Naive thymus-derived CD4-positive, alpha-beta T cell (primary cell): ENCODE measurements at regions of chr4 and their contacts with region 1.

Region 1: GRCh38 chr4:6909073-6909965 is at the start of gene TBC1D14:
- DNase-seq: peak; percentile 84 to 93 (median 90)
- ATAC-seq: peak; percentile 94
- H3K4me3 ChIP-seq: peak within 1 kb of the TSS; percentile 70
- H3K4me3 Mint-ChIP-seq: peak within 1 kb of the TSS; percentile 89 to 95 (median 91)
- H3K27ac ChIP-seq: peak within 1 kb of the TSS; percentile 97
- H3K27ac Mint-ChIP-seq: peak within 1 kb of the TSS; percentile 81 to 94 (median 91)
- H3K4me1 ChIP-seq: peaks cover 20 to 38% of the 10 kb centered on the region in 2 donors
- H3K4me1 Mint-ChIP-seq: peaks cover 45 to 60% (median 55%) of the 10 kb centered on the region in 7 donors
- H3K27me3 ChIP-seq: no peaks in the 10 kb centered on the region
- H3K27me3 Mint-ChIP-seq: peaks cover 0 to 2% (median 0%) of the 10 kb centered on the region in 5 donors
- total RNA-seq, gene TBC1D14: 42.9 to 72.2 (median 58.3) TPM

Region 2: DNA sequence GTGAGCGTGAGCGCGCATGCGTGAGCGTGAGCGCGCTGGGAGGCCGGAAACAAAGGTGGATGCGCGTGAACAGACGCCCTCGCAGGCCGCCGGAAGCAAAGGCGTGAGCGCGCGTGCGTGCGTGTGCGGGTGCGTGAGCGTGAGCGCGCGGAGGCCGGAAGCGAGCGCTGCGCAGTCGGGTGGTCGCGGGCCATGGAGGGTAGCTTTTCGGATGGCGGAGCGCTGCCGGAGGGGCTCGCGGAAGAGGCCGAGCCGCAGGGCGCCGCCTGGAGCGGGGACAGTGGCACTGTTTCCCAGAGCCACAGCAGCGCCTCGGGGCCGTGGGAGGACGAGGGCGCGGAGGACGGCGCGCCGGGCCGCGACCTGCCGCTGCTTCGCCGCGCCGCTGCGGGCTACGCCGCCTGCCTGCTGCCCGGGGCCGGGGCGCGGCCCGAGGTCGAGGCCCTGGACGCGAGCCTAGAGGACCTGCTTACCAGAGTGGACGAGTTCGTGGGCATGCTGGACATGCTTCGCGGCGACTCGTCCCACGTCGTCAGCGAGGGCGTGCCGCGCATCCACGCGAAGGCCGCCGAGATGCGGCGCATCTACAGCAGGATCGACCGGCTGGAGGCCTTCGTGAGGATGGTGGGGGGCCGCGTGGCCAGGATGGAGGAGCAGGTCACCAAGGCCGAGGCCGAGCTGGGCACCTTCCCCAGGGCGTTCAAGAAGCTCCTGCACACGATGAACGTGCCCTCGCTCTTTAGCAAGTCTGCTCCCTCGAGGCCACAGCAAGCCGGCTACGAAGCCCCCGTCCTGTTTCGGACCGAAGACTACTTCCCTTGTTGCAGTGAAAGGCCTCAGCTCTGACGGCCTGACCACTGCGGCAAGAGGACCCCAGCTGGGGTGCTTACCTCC is 193.1 kb before region 1 on chr4 and contains the start of gene BLOC1S4:
- CTCF ChIA-PET with region 1: interaction called, 3 read pairs
- POLR2A ChIA-PET with region 1: interaction called, 4 read pairs
- intact Hi-C with region 1: loop called (anchors 1 kb)
- DNase-seq: peak; percentile 86 to 95 (median 91)
- ATAC-seq: peak; percentile 92
- H3K4me3 ChIP-seq: peak within 1 kb of the TSS; percentile 86
- H3K4me3 Mint-ChIP-seq: peak within 1 kb of the TSS; percentile 89 to 99 (median 95)
- H3K27ac ChIP-seq: peak within 1 kb of the TSS; percentile 90
- H3K27ac Mint-ChIP-seq: peak within 1 kb of the TSS; percentile 94 to 100 (median 97)
- H3K4me1 ChIP-seq: peaks cover 19 to 20% of the 10 kb centered on the region in 2 donors
- H3K4me1 Mint-ChIP-seq: peaks cover 22 to 52% (median 36%) of the 10 kb centered on the region in 7 donors
- H3K27me3 ChIP-seq: no peaks in the 10 kb centered on the region
- H3K27me3 Mint-ChIP-seq: peaks cover 0 to 8% (median 0%) of the 10 kb centered on the region in 5 donors
- total RNA-seq, gene BLOC1S4: 18.7 to 45.9 (median 25.0) TPM

Region 3: GRCh38 chr4:6926681-6927478 is 17.6 kb after region 1 on chr4:
- CTCF ChIA-PET with region 1: interaction called, 5 read pairs
- POLR2A ChIA-PET with region 1: interaction called, 15 read pairs
- intact Hi-C with region 1: loop called (anchors 1 to 2 kb)
- DNase-seq: peak in 7 of 9 donors; percentile 25 to 75 (median 43)
- ATAC-seq: peak; percentile 82
- H3K4me3 ChIP-seq: peak overlapping the region; percentile 36
- H3K4me3 Mint-ChIP-seq: peak overlapping the region; percentile 64 to 92 (median 79)
- H3K27ac ChIP-seq: peak overlapping the region; percentile 56
- H3K27ac Mint-ChIP-seq: peak overlapping the region; percentile 65 to 95 (median 87)
- H3K4me1 ChIP-seq: peaks cover 26 to 48% of the 10 kb centered on the region in 2 donors
- H3K4me1 Mint-ChIP-seq: peaks cover 68 to 90% (median 79%) of the 10 kb centered on the region in 7 donors
- H3K27me3 ChIP-seq: no peaks in the 10 kb centered on the region
- H3K27me3 Mint-ChIP-seq: no peaks in the 10 kb centered on the region

Region 4: DNA sequence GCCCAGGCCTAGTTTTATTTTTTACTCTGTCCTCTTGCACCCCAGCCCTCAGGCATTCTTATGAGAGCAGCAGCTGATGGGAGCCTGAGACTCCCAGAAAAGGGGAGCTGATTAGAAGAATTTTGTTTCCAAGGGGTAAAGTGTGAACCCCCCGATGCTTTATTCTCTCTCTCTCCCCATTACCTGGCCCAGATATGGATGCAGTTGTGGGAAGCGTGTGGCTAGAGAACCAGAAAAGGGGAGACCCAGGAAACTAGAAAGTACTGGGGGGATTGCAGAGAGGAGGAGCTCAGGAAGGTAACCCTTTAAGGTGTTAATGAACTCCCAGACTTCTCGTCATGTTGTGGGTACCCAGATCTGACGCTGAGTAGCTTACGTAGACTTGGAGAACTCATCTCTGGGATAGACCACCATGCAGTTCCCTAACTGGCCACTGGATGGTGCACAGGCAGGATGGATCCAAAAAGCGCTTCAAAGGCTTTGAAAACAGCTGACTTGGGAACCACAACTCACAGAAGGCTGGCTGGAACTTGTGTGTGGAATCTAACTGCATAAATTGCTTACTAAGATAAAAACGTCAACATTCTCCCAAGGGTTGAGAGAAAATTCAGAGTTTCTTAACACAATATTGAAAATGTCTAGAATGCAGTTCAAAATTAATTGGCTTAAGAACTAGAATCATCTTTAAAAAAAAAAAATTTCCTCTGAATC is 65.0 kb after region 1 on chr4:
- CTCF ChIA-PET with region 1: interaction called, 5 read pairs
- POLR2A ChIA-PET with region 1: interaction called, 9 read pairs
- intact Hi-C with region 1: loop called in 1 of 2 experiments (anchors 1 kb)
- DNase-seq: peak; percentile 55 to 82 (median 74)
- ATAC-seq: peak; percentile 100
- H3K4me3 ChIP-seq: no peak overlapping the region
- H3K4me3 Mint-ChIP-seq: peak overlapping the region in 3 of 10 donors; percentile 11 to 45 (median 18)
- H3K27ac ChIP-seq: no peak overlapping the region
- H3K27ac Mint-ChIP-seq: peak overlapping the region in 5 of 9 donors; percentile 43 to 86 (median 69)
- H3K4me1 ChIP-seq: peaks cover 0 to 9% of the 10 kb centered on the region in 2 donors
- H3K4me1 Mint-ChIP-seq: peaks cover 5 to 38% (median 22%) of the 10 kb centered on the region in 7 donors
- H3K27me3 ChIP-seq: no peaks in the 10 kb centered on the region
- H3K27me3 Mint-ChIP-seq: no peaks in the 10 kb centered on the region

Region 5: DNA sequence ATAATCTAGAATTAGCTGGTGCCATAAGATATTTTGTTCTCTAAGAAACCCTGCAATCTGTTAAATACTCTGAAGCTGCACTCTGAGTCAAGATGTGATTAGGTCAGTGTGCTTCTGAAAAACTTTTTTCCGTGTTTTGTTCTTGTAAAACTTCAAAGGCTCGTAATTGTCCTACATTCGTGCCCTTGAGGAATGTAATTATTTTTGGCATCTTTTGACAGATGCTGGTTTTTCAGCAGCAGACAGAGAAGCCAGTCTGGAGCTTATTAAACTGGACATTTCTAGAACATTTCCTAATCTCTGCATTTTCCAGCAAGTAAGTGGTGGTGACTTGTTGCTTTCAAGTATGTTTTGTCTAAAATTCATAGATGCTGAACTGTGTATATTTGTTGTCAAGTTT is 97.1 kb after region 1 on chr4:
- CTCF ChIA-PET with region 1: no interaction called
- POLR2A ChIA-PET with region 1: no interaction called
- intact Hi-C with region 1: no loop called
- DNase-seq: no peak
- ATAC-seq: no peak
- H3K4me3 ChIP-seq: no peak overlapping the region
- H3K4me3 Mint-ChIP-seq: no peak overlapping the region
- H3K27ac ChIP-seq: no peak overlapping the region
- H3K27ac Mint-ChIP-seq: peak overlapping the region in 1 of 9 donors; percentile 12
- H3K4me1 ChIP-seq: no peaks in the 10 kb centered on the region
- H3K4me1 Mint-ChIP-seq: peaks cover 0 to 15% (median 0%) of the 10 kb centered on the region in 7 donors
- H3K27me3 ChIP-seq: no peaks in the 10 kb centered on the region
- H3K27me3 Mint-ChIP-seq: no peaks in the 10 kb centered on the region

Region 6: DNA sequence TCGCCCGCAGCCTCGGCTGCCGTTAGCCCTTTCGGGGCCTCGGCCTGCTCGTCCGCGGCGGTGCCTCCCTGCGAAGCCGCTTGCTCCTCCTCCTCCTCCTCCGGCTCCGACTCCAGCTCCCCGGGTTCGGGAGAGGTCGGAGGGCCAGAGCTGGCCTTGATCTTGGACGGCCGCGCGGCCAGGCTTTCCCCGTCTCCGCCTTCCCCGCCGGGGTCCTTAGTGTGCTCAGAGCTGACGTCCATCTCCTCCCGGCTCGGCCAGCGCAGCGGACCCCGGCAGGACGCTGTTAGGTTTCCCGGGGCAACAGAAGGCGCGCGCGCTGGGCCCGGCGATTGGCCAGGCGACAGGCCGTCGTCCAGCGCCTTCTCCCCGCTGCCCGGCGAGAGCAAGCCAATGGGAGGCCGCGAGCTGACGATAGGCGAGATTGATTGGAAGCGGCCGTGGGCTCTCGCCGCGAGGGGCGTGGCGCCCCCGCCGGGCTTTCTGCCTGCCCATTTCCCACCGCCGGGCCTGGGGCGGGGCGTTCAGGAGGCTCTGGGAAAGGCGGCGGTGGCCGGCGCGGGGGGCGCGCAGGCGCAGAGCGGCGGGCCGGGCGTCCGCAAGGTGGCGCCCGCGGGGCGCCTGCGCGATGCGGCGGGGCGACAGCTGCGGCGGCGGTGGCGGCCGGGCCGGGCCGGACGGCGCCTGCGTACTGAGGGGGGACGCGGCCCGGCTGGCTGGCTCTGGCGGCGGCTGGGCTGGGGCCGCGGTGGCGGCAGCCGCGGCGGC is 133.6 kb after region 1 on chr4 and contains the start of gene TADA2B:
- CTCF ChIA-PET with region 1: interaction called, 4 read pairs
- POLR2A ChIA-PET with region 1: interaction called, 15 read pairs
- intact Hi-C with region 1: loop called (anchors 1 kb)
- DNase-seq: peak; percentile 79 to 99 (median 88)
- ATAC-seq: peak; percentile 89
- H3K4me3 ChIP-seq: peak within 1 kb of the TSS; percentile 84
- H3K4me3 Mint-ChIP-seq: peak within 1 kb of the TSS; percentile 90 to 95 (median 92)
- H3K27ac ChIP-seq: peak within 1 kb of the TSS; percentile 85
- H3K27ac Mint-ChIP-seq: peak within 1 kb of the TSS; percentile 80 to 92 (median 89)
- H3K4me1 ChIP-seq: peaks cover 33 to 40% of the 10 kb centered on the region in 2 donors
- H3K4me1 Mint-ChIP-seq: peaks cover 38 to 58% (median 52%) of the 10 kb centered on the region in 7 donors
- H3K27me3 ChIP-seq: no peaks in the 10 kb centered on the region
- H3K27me3 Mint-ChIP-seq: peaks cover 0 to 15% (median 0%) of the 10 kb centered on the region in 5 donors
- total RNA-seq, gene TADA2B: 26.8 to 49.0 (median 41.5) TPM